ENCODE measurements at regions of chr6 and their contacts with region 1.

Region 1: GRCh38 chr6:146770965-146771735 is 172.4 kb downstream of the ADGB start:
- DNase-seq: peak; percentile 79
- H3K4me3 Mint-ChIP-seq: peak overlapping the region; percentile 62
- H3K27ac Mint-ChIP-seq: no peak overlapping the region
- H3K4me1 Mint-ChIP-seq: peaks cover 22% of the 10 kb centered on the region
- H3K27me3 Mint-ChIP-seq: no peaks in the 10 kb centered on the region

Region 2: DNA sequence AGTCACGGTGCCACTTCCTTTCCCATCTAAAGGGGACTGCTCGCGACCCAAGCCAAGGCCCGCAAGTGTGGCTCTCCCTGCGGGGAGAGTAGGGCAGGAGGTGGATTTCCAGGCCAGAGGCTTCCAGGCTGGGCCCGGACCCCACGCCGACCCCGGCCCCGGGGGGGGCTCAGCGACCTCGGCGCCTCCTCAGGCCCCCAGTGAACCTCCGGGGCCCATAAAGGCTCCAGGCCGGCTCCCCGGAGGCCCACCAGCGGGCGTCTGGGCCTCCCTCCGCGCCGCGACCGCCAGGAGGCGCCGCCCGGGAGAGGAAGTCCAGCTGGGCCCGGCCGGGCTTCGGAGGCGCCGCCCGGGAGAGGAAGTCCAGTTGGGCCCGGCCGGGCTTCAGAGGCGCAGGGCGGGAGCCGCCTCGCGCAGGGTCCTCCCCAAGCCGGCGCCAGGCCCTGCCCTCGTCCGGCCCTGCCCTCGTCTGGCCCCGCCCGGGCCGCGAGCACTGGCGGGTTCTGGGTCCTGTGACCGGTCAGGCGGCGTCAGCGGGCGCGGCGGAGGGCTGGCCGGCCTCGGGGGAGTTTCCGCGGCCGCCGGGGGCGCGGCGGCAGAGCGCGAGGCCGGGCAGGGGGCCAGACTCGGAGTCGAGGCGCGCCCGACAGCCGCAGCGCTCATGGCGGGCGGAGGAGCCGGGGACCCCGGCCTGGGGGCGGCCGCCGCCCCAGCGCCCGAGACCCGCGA is 227.8 kb before region 1 on chr6 and contains the start of gene RAB32:
- CTCF ChIA-PET with region 1: no interaction called
- intact Hi-C with region 1: loop called (anchors 5 kb)
- DNase-seq: no peak
- H3K4me3 Mint-ChIP-seq: peak within 1 kb of the TSS; percentile 59
- H3K27ac Mint-ChIP-seq: no peak within 1 kb of the TSS
- H3K4me1 Mint-ChIP-seq: peaks cover 6% of the 10 kb centered on the region
- H3K27me3 Mint-ChIP-seq: peaks cover 41% of the 10 kb centered on the region
- total RNA-seq, gene RAB32: 0.25 TPM in 1 of 2 experiments, not detected in the other

Measured in activated naive CD4-positive, alpha-beta T cell treated with anti-CD3 and anti-CD28 coated beads for 36 hours (primary cell).